Activated CD8-positive, alpha-beta T cell treated with anti-CD3 and anti-CD28 coated beads for 36 hours (primary cell): ENCODE measurements at regions of chr19 and their contacts with region 1.

Region 1: DNA sequence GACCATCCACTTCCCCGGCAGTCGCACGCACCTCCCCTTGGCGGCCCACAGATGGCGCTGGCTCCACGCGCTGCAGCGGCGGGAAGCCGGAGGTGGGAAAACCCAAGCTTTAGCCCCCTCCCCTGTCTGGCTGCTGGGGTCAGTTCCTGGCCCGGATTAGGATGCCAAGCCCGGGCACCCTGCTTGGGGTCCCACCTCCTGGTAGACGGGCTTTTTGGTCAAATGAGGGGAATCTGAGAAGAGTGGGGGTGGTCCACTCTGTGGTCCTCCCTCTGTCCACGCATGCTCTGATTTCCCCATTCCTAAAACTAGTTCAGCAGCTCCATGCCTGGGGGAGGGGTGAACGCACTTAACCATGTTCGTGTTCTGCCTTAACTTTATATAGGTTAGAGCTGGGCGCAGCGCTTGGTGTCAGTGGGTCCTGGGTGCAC is 8.1 kb upstream of the ADGRE2 start:
- DNase-seq: peak; percentile 45
- ATAC-seq: no peak
- H3K4me3 Mint-ChIP-seq: no peak overlapping the region
- H3K27ac Mint-ChIP-seq: no peak overlapping the region
- H3K4me1 Mint-ChIP-seq: peaks cover 16% of the 10 kb centered on the region
- H3K27me3 Mint-ChIP-seq: peaks cover 13% of the 10 kb centered on the region
- CTCF ChIP-seq: peak; percentile 92

Region 2: GRCh38 chr19:14775869-14776586 is 10.4 kb before region 1 on chr19:
- CTCF ChIA-PET with region 1: interaction called, 10 read pairs
- POLR2A ChIA-PET with region 1: no interaction called
- intact Hi-C with region 1: no loop called
- DNase-seq: no peak
- ATAC-seq: no peak
- H3K4me3 Mint-ChIP-seq: no peak overlapping the region
- H3K27ac Mint-ChIP-seq: no peak overlapping the region
- H3K4me1 Mint-ChIP-seq: peaks cover 7% of the 10 kb centered on the region
- H3K27me3 Mint-ChIP-seq: peaks cover 29% of the 10 kb centered on the region
- CTCF ChIP-seq: no peak